ENCODE measurements at regions of chr16 and their contacts with region 1.

Region 1: DNA sequence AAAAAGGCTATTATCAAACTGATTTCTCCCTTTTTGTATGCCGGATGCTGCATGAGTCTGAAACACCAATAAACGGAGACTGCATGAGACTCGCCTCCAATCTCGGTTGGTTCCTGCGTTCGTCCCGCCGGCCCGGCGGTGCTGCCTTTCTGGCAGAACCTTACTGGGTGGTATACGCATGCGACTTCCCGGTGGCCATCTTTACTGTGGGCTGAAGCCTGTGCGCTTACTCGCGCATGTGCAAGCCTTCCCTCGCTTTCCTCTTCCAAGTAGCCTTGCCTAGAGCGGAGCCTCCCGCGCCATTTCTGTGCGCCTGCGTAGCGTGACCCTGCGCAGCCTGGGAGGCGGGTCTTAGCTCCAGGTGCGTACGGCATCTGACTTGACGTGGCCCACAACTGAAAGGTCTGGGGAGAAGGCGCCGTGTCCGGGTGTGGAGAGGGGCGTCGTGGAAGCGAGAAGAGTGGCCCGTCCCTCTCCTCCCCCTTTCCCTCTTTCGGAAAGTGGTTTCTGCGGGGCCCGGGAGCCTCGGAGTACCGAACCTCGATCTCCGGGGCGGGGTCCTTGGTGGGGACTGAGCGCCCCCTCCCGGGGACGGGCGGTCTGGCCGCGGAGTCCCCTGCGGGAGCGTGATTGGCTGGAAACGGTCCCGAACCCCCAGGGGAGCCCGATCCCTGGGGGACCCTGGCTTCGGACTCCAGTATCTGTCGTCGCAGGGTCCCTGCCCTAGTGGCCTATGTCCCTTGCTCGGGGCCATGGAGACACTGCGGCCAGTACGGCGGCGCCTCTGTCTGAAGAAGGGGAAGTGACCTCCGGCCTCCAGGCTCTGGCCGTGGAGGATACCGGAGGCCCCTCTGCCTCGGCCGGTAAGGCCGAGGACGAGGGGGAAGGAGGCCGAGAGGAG is at the start of gene PAGR1:
- DNase-seq: peak; percentile 98
- H3K4me3 ChIP-seq: peak within 1 kb of the TSS; percentile 19 to 71 (median 55)
- H3K27ac ChIP-seq: peak within 1 kb of the TSS; percentile 84 to 98 (median 90)
- H3K4me1 ChIP-seq: peaks cover 29 to 50% of the 10 kb centered on the region in 2 donors
- H3K27me3 ChIP-seq: no peaks in the 10 kb centered on the region
- CTCF ChIP-seq: peak; percentile 62 to 94 (median 84)
- POLR2A ChIP-seq: peak; percentile 50 to 83
- total RNA-seq, gene PAGR1: 38.2 to 75.0 (median 55.2) TPM

Region 2: DNA sequence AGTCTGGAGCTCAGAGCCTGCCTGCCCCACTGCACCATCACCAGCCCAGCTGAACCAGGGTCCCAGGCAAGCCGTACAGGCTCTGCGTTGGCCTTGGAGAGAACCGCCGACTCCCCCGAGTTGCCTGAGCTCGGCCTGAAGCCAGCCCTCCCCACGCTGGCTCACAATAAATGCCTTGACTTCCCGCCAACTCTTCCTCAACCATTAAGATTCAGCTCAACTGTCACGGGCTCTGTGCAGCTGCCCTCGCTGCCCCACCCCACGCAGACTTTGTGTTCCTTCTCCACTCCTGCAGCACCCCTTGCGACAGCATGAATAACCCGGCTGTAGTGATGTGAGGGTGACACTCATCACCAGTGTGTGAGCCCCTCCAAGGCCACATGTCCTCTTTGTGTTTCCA is 141.9 kb before region 1 on chr16:
- intact Hi-C with region 1: no loop called
- DNase-seq: peak; percentile 57 to 61
- H3K4me3 ChIP-seq: no peak overlapping the region
- H3K27ac ChIP-seq: no peak overlapping the region
- H3K4me1 ChIP-seq: peaks cover 0 to 4% of the 10 kb centered on the region in 2 donors
- H3K27me3 ChIP-seq: no peaks in the 10 kb centered on the region
- CTCF ChIP-seq: no peak
- POLR2A ChIP-seq: no peak

Region 3: GRCh38 chr16:29700253-29700987 is 115.6 kb before region 1 on chr16:
- intact Hi-C with region 1: loop called (anchors 5 kb)
- DNase-seq: peak; percentile 80 to 83
- H3K4me3 ChIP-seq: no peak overlapping the region
- H3K27ac ChIP-seq: no peak overlapping the region
- H3K4me1 ChIP-seq: peaks cover 0 to 3% of the 10 kb centered on the region in 2 donors
- H3K27me3 ChIP-seq: no peaks in the 10 kb centered on the region
- CTCF ChIP-seq: peak; percentile 76 to 93 (median 86)
- POLR2A ChIP-seq: no peak

Region 4: GRCh38 chr16:29926005-29926710 is 110.1 kb after region 1 on chr16 and contains the start of gene KCTD13:
- intact Hi-C with region 1: loop called (anchors 10 kb)
- DNase-seq: peak; percentile 79 to 80
- H3K4me3 ChIP-seq: peak within 1 kb of the TSS; percentile 38 to 93 (median 71)
- H3K27ac ChIP-seq: peak within 1 kb of the TSS; percentile 76 to 83 (median 80)
- H3K4me1 ChIP-seq: peaks cover 8 to 15% of the 10 kb centered on the region in 2 donors
- H3K27me3 ChIP-seq: no peaks in the 10 kb centered on the region
- CTCF ChIP-seq: no peak
- POLR2A ChIP-seq: peak in 1 of 2 donors; percentile 86
- total RNA-seq, gene KCTD13: 9.8 to 27.5 (median 15.5) TPM

Measured in thyroid gland (tissue), 4 donors.